A549 (cell line): ENCODE measurements at regions of chr2 and their contacts with region 1.

Region 1: GRCh38 chr2:86368161-86368824 is 30.9 kb upstream of the REEP1 start:
- DNase-seq: peak; percentile 35 to 67
- ATAC-seq: peak; percentile 37 to 66; a peak in 4 of 6 replicates
- H3K4me3 ChIP-seq: no peak overlapping the region
- H3K27ac ChIP-seq: no peak overlapping the region
- H3K4me1 ChIP-seq: no peaks in the 10 kb centered on the region
- CTCF ChIP-seq: peak; percentile 67
- EP300 ChIP-seq: no peak
- POLR2A ChIP-seq: no peak
- RAD21 ChIP-seq: peak; percentile 60 to 74

Region 2: GRCh38 chr2:86221066-86221684 is 147.1 kb before region 1 on chr2:
- CTCF ChIA-PET with region 1: interaction called, 19 read pairs
- POLR2A ChIA-PET with region 1: no interaction called
- DNase-seq: peak; percentile 44 to 61
- ATAC-seq: peak; percentile 33 to 75; a peak in 4 of 6 replicates
- H3K4me3 ChIP-seq: no peak overlapping the region
- H3K27ac ChIP-seq: no peak overlapping the region
- H3K4me1 ChIP-seq: no peaks in the 10 kb centered on the region
- CTCF ChIP-seq: peak; percentile 64
- EP300 ChIP-seq: no peak
- POLR2A ChIP-seq: no peak
- RAD21 ChIP-seq: peak; percentile 69 to 73

Region 3: GRCh38 chr2:86298411-86299379 is 69.6 kb before region 1 on chr2:
- CTCF ChIA-PET with region 1: interaction called, 19 read pairs
- POLR2A ChIA-PET with region 1: no interaction called
- DNase-seq: peak; percentile 44 to 65
- ATAC-seq: peak; percentile 72 to 86; a peak in 5 of 6 replicates
- H3K4me3 ChIP-seq: no peak overlapping the region
- H3K27ac ChIP-seq: no peak overlapping the region
- H3K4me1 ChIP-seq: no peaks in the 10 kb centered on the region
- CTCF ChIP-seq: peak; percentile 32; the same call in 2 of the 3 replicates
- EP300 ChIP-seq: no peak
- POLR2A ChIP-seq: no peak
- RAD21 ChIP-seq: peak; percentile 51 to 63

Region 4: DNA sequence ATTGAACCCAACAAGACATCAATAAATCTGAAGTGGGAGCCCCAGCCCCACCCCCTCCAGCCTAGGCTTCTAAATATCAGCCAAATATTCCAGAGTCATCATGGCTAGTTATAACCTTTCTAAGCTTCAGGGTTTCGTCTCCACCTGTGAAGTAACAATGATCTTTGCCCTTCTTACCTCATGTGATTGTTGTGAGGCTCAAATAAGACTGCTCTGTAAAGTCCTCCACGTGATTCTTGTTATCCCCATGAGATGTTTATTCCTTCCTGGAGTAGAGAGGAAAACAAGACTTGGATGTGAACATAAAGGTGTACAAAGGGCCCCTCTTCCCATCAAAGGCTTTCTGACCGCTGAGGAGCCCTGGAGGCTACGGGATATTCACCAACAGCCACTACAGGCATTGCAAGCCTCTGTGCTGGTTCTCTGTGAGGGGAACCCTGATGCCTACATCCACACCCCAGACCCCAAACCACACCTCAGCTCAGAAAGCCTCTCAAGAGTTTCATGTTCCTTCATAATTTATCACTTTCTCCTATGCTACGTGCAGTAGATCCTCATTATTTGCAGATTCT is 10.8 kb before region 1 on chr2:
- CTCF ChIA-PET with region 1: interaction called, 16 read pairs
- POLR2A ChIA-PET with region 1: no interaction called
- DNase-seq: no peak
- ATAC-seq: no peak
- H3K4me3 ChIP-seq: no peak overlapping the region
- H3K27ac ChIP-seq: no peak overlapping the region
- H3K4me1 ChIP-seq: peaks cover 2% of the 10 kb centered on the region; the same call in 2 of the 3 replicates
- CTCF ChIP-seq: no peak
- EP300 ChIP-seq: no peak
- POLR2A ChIP-seq: no peak
- RAD21 ChIP-seq: no peak

Region 5: GRCh38 chr2:86383844-86384243 is 15.6 kb after region 1 on chr2:
- CTCF ChIA-PET with region 1: interaction called, 21 read pairs
- POLR2A ChIA-PET with region 1: no interaction called
- DNase-seq: no peak
- ATAC-seq: no peak
- H3K4me3 ChIP-seq: no peak overlapping the region
- H3K27ac ChIP-seq: no peak overlapping the region
- H3K4me1 ChIP-seq: no peaks in the 10 kb centered on the region
- CTCF ChIP-seq: no peak
- EP300 ChIP-seq: no peak
- POLR2A ChIP-seq: no peak
- RAD21 ChIP-seq: no peak

Region 6: GRCh38 chr2:86396291-86396785 is 28.0 kb after region 1 on chr2:
- CTCF ChIA-PET with region 1: interaction called, 14 read pairs
- POLR2A ChIA-PET with region 1: no interaction called
- DNase-seq: peak; percentile 38 to 72
- ATAC-seq: peak; percentile 85 to 94
- H3K4me3 ChIP-seq: no peak overlapping the region
- H3K27ac ChIP-seq: 0 out of 6 replicates have a peak overlapping the region, but pooled peaks of 1 of the 2 experiments have one; percentile 27
- H3K4me1 ChIP-seq: 0 out of 3 replicates have a peak, but pooled peaks cover 3% of the 10 kb centered on the region
- CTCF ChIP-seq: peak; percentile 55
- EP300 ChIP-seq: no peak
- POLR2A ChIP-seq: no peak
- RAD21 ChIP-seq: peak; percentile 71 to 79